ENCODE measurements at regions of chr2 and their contacts with region 1.

Region 1: GRCh38 chr2:105521205-105521604 is 122.4 kb upstream of the FHL2 start:
- DNase-seq: no peak
- ATAC-seq: no peak
- H3K4me3 Mint-ChIP-seq: no peak overlapping the region
- H3K27ac Mint-ChIP-seq: no peak overlapping the region
- H3K4me1 Mint-ChIP-seq: no peaks in the 10 kb centered on the region
- H3K27me3 Mint-ChIP-seq: no peaks in the 10 kb centered on the region

Region 2: GRCh38 chr2:105362862-105363591 is 158.2 kb before region 1 on chr2:
- CTCF ChIA-PET with region 1: interaction called, 51 read pairs
- POLR2A ChIA-PET with region 1: no interaction called
- DNase-seq: no peak
- ATAC-seq: no peak
- H3K4me3 Mint-ChIP-seq: no peak overlapping the region
- H3K27ac Mint-ChIP-seq: peak overlapping the region; percentile 40
- H3K4me1 Mint-ChIP-seq: peaks cover 29% of the 10 kb centered on the region
- H3K27me3 Mint-ChIP-seq: no peaks in the 10 kb centered on the region

Region 3: DNA sequence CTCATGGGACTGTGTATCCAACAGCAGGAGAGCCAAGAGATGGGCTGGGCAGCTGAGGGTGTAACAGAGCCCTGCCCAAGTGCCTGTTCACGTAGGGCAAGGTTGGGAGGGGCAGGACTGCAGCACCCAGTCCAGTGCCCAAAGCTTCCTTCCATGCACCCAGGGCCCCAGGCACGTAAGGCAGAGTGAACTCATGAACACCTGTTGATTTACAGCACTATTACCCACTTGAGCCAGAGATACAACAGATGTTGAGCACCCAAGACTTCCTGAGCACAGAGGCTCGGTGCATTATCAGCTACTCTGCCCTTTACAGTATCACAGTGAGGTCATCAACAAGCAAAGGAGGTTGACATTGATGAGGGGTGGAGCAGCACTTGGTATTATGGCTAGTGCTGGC is 72.1 kb before region 1 on chr2:
- CTCF ChIA-PET with region 1: no interaction called
- POLR2A ChIA-PET with region 1: no interaction called
- DNase-seq: no peak
- ATAC-seq: no peak
- H3K4me3 Mint-ChIP-seq: no peak overlapping the region
- H3K27ac Mint-ChIP-seq: no peak overlapping the region
- H3K4me1 Mint-ChIP-seq: no peaks in the 10 kb centered on the region
- H3K27me3 Mint-ChIP-seq: peaks cover 25% of the 10 kb centered on the region

Region 4: DNA sequence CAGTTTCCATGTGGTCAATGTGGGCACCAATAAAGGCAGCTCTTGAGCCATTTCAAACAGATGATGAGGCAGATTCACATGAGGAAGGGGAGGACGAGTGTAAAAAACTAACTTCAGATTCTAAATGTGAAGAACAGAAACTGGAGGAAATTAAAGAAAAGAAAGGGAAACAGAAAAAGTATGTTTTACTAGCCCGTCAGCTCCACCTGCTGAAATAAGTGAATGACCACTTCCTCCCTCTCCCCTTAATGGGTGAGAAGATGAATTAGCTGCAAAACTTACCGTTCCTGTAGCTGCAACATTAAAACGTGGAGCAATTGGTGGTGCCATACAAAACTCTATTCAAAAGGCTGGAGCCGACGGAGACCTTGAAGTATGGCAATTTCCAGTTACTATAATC is 469.4 kb after region 1 on chr2:
- CTCF ChIA-PET with region 1: no interaction called
- POLR2A ChIA-PET with region 1: no interaction called
- DNase-seq: peak; percentile 7
- ATAC-seq: no peak
- H3K4me3 Mint-ChIP-seq: no peak overlapping the region
- H3K27ac Mint-ChIP-seq: no peak overlapping the region
- H3K4me1 Mint-ChIP-seq: peaks cover 28% of the 10 kb centered on the region
- H3K27me3 Mint-ChIP-seq: no peaks in the 10 kb centered on the region